Activated CD8-positive, alpha-beta T cell treated with anti-CD3 and anti-CD28 coated beads for 36 hours (primary cell): ENCODE measurements at regions of chr1 and their contacts with region 1.

Region 1: GRCh38 chr1:89987170-89987819 is 7.6 kb upstream of the ZNF326 start:
- DNase-seq: peak; percentile 65
- ATAC-seq: peak; percentile 93
- H3K4me3 Mint-ChIP-seq: no peak overlapping the region
- H3K27ac Mint-ChIP-seq: no peak overlapping the region
- H3K4me1 Mint-ChIP-seq: peaks cover 10% of the 10 kb centered on the region
- H3K27me3 Mint-ChIP-seq: peaks cover 4% of the 10 kb centered on the region
- CTCF ChIP-seq: peak; percentile 83

Region 2: GRCh38 chr1:89780721-89781120 is 206.6 kb before region 1 on chr1:
- CTCF ChIA-PET with region 1: interaction called, 50 read pairs
- POLR2A ChIA-PET with region 1: no interaction called
- intact Hi-C with region 1: loop called (anchors 5 kb)
- DNase-seq: peak; percentile 62
- ATAC-seq: peak; percentile 68
- H3K4me3 Mint-ChIP-seq: peak overlapping the region; percentile 36
- H3K27ac Mint-ChIP-seq: peak overlapping the region; percentile 93
- H3K4me1 Mint-ChIP-seq: peaks cover 48% of the 10 kb centered on the region
- H3K27me3 Mint-ChIP-seq: no peaks in the 10 kb centered on the region
- CTCF ChIP-seq: peak; percentile 56

Region 3: GRCh38 chr1:89790592-89790991 is 196.7 kb before region 1 on chr1:
- CTCF ChIA-PET with region 1: interaction called, 10 read pairs
- POLR2A ChIA-PET with region 1: no interaction called
- intact Hi-C with region 1: no loop called
- DNase-seq: no peak
- ATAC-seq: no peak
- H3K4me3 Mint-ChIP-seq: no peak overlapping the region
- H3K27ac Mint-ChIP-seq: no peak overlapping the region
- H3K4me1 Mint-ChIP-seq: no peaks in the 10 kb centered on the region
- H3K27me3 Mint-ChIP-seq: no peaks in the 10 kb centered on the region
- CTCF ChIP-seq: no peak

Region 4: DNA sequence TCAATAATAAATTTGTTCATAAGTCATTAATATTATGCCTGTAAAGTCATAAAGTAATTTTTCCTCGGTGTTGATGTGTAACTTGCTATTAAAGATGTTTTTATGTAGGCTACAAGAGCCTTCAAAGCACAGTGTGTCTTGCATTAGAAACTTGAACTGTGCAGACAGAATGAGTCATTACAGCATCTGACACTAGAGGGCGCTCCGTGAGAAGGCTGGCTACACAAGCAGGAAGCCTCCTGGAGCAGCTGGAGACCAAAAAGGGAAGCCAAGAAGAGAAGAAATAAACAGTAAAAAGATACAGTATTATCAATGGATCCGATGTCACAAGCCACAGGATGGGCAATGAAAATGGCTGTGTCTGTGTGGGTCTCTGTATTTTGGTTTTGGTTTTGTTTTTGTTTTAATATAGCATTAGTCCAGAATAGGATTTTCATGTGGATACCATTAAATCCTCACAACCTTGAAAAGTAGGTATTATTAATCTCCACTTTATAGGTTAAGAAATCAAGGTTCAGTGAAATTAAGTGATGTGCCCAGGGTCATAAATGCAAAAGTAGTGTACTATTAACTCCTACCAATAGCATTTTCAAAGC is 182.6 kb before region 1 on chr1:
- CTCF ChIA-PET with region 1: interaction called, 31 read pairs
- POLR2A ChIA-PET with region 1: no interaction called
- intact Hi-C with region 1: loop called (anchors 1 kb)
- DNase-seq: peak; percentile 94
- ATAC-seq: peak; percentile 95
- H3K4me3 Mint-ChIP-seq: no peak overlapping the region
- H3K27ac Mint-ChIP-seq: no peak overlapping the region
- H3K4me1 Mint-ChIP-seq: peaks cover 5% of the 10 kb centered on the region
- H3K27me3 Mint-ChIP-seq: peaks cover 2% of the 10 kb centered on the region
- CTCF ChIP-seq: peak; percentile 98

Region 5: DNA sequence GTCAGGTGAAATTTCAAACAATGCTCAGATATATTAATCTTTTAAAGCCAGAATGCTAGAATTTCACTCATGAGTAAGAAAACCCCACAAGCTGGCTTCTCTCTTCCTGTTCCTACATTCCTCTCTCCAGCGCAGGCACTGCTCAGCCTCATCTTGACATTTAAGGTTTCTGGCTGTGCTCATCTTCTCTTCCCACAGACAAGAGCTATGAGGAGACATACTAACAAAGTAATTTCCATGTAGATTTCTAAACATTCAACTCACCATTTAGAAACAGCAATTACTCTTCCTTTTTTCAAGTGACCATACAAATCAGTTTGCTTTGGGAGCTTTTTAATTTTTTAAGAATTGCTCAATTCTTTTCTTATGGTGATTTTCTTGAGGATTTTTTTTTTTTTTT is 174.3 kb before region 1 on chr1:
- CTCF ChIA-PET with region 1: interaction called, 15 read pairs
- POLR2A ChIA-PET with region 1: interaction called, 3 read pairs
- intact Hi-C with region 1: no loop called
- DNase-seq: no peak
- ATAC-seq: no peak
- H3K4me3 Mint-ChIP-seq: no peak overlapping the region
- H3K27ac Mint-ChIP-seq: no peak overlapping the region
- H3K4me1 Mint-ChIP-seq: peaks cover 14% of the 10 kb centered on the region
- H3K27me3 Mint-ChIP-seq: peaks cover 3% of the 10 kb centered on the region
- CTCF ChIP-seq: no peak

Region 6: GRCh38 chr1:89975540-89976125 is 11.7 kb before region 1 on chr1:
- CTCF ChIA-PET with region 1: interaction called, 20 read pairs
- POLR2A ChIA-PET with region 1: interaction called, 3 read pairs
- intact Hi-C with region 1: no loop called
- DNase-seq: no peak
- ATAC-seq: no peak
- H3K4me3 Mint-ChIP-seq: no peak overlapping the region
- H3K27ac Mint-ChIP-seq: no peak overlapping the region
- H3K4me1 Mint-ChIP-seq: no peaks in the 10 kb centered on the region
- H3K27me3 Mint-ChIP-seq: no peaks in the 10 kb centered on the region
- CTCF ChIP-seq: no peak

Region 7: DNA sequence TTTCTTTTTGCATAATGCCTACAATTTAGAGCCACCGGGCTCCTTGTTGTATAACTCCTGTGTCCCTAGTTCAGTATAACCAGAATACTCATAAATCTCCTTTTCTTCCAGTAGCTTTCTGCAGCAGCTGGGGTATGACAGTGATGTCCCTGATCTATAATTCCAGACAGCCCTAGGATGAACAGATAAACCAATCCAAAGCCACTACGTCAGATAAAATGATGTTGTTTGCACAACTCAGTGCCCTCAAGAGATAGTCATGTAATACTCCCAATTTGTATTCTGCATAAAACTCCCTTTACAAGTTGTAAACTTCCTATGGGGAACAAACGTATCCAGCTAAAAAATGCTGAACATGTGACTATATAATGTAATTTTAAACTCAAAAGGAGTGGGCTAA is 52.4 kb after region 1 on chr1:
- CTCF ChIA-PET with region 1: no interaction called
- POLR2A ChIA-PET with region 1: no interaction called
- intact Hi-C with region 1: no loop called
- DNase-seq: no peak
- ATAC-seq: no peak
- H3K4me3 Mint-ChIP-seq: no peak overlapping the region
- H3K27ac Mint-ChIP-seq: no peak overlapping the region
- H3K4me1 Mint-ChIP-seq: no peaks in the 10 kb centered on the region
- H3K27me3 Mint-ChIP-seq: no peaks in the 10 kb centered on the region
- CTCF ChIP-seq: no peak